Naive thymus-derived CD4-positive, alpha-beta T cell (primary cell): ENCODE measurements at regions of chr9 and their contacts with region 1.

Region 1: GRCh38 chr9:35646533-35647265 is 4.0 kb downstream of the SIT1 start:
- DNase-seq: peak; percentile 87 to 96 (median 93)
- ATAC-seq: peak; percentile 95
- H3K4me3 ChIP-seq: peak overlapping the region; percentile 90
- H3K4me3 Mint-ChIP-seq: peak overlapping the region; percentile 90 to 100 (median 96)
- H3K27ac ChIP-seq: peak overlapping the region; percentile 83
- H3K27ac Mint-ChIP-seq: peak overlapping the region; percentile 86 to 99 (median 96)
- H3K4me1 ChIP-seq: peaks cover 44 to 51% of the 10 kb centered on the region in 2 donors
- H3K4me1 Mint-ChIP-seq: peaks cover 40 to 70% (median 46%) of the 10 kb centered on the region in 7 donors
- H3K27me3 ChIP-seq: no peaks in the 10 kb centered on the region
- H3K27me3 Mint-ChIP-seq: no peaks in the 10 kb centered on the region

Region 2: GRCh38 chr9:35611230-35611797 is 35.4 kb before region 1 on chr9:
- CTCF ChIA-PET with region 1: interaction called, 118 read pairs
- POLR2A ChIA-PET with region 1: interaction called, 94 read pairs
- intact Hi-C with region 1: no loop called
- DNase-seq: peak in 6 of 9 donors; percentile 36 to 55 (median 45)
- ATAC-seq: peak; percentile 90
- H3K4me3 ChIP-seq: no peak overlapping the region
- H3K4me3 Mint-ChIP-seq: peak overlapping the region in 1 of 10 donors; percentile 6
- H3K27ac ChIP-seq: no peak overlapping the region
- H3K27ac Mint-ChIP-seq: peak overlapping the region in 3 of 9 donors; percentile 35 to 69 (median 39)
- H3K4me1 ChIP-seq: peaks cover 15 to 17% of the 10 kb centered on the region in 2 donors
- H3K4me1 Mint-ChIP-seq: peaks cover 18 to 32% (median 24%) of the 10 kb centered on the region in 7 donors
- H3K27me3 ChIP-seq: no peaks in the 10 kb centered on the region
- H3K27me3 Mint-ChIP-seq: no peaks in the 10 kb centered on the region

Region 3: DNA sequence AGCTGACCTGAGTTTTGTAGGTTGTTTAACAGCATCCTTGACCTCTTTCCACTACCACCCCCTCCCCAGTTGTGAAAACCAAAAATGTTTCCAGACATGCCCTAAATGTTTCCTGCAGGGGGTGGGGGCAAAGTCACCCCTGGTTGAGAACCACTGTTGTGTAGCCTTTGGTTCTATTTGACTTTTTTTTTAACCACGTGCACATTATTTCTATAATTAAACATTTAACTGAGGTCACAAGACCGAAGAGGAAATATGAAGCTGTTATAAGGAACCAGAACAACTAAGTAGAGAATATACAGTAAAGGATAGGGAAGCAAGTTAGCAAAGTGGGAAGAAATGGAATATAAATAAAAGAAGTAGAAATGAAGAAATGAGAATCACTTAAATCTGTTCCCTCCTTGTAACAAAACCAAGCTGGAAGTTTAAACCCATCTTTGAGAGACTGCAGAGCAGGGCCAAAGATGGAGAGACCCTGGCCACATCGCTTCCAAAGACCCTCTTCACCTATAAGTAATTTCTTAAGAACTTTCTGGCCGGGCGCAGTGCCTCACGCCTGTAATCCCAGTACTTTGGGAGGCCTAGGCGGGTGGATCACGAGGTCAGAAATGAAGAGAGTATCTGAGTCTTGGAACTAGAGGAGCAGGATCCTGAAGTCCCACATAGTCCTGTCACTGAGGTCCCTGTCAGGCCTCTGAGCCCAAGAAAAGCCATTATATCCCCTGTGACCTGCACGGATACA is 10.4 kb before region 1 on chr9:
- CTCF ChIA-PET with region 1: no interaction called
- POLR2A ChIA-PET with region 1: interaction called, 14 read pairs
- intact Hi-C with region 1: loop called in 1 of 2 experiments (anchors 1 kb)
- DNase-seq: no peak
- ATAC-seq: peak; percentile 49
- H3K4me3 ChIP-seq: no peak overlapping the region
- H3K4me3 Mint-ChIP-seq: peak overlapping the region in 2 of 10 donors; percentile 20 to 37
- H3K27ac ChIP-seq: no peak overlapping the region
- H3K27ac Mint-ChIP-seq: peak overlapping the region in 6 of 9 donors; percentile 21 to 90 (median 62)
- H3K4me1 ChIP-seq: peaks cover 19 to 35% of the 10 kb centered on the region in 2 donors
- H3K4me1 Mint-ChIP-seq: peaks cover 38 to 64% (median 53%) of the 10 kb centered on the region in 7 donors
- H3K27me3 ChIP-seq: no peaks in the 10 kb centered on the region
- H3K27me3 Mint-ChIP-seq: no peaks in the 10 kb centered on the region

Region 4: GRCh38 chr9:35664531-35665470 is 18.1 kb after region 1 on chr9 and contains the start of gene ARHGEF39:
- CTCF ChIA-PET with region 1: interaction called, 103 read pairs
- POLR2A ChIA-PET with region 1: interaction called, 264 read pairs
- intact Hi-C with region 1: loop called in 1 of 2 experiments (anchors 2 kb)
- DNase-seq: peak; percentile 47 to 87 (median 59)
- ATAC-seq: peak; percentile 78
- H3K4me3 ChIP-seq: peak within 1 kb of the TSS; percentile 69
- H3K4me3 Mint-ChIP-seq: peak within 1 kb of the TSS; percentile 82 to 94 (median 87)
- H3K27ac ChIP-seq: peak within 1 kb of the TSS; percentile 54
- H3K27ac Mint-ChIP-seq: peak within 1 kb of the TSS; percentile 60 to 100 (median 80)
- H3K4me1 ChIP-seq: peaks cover 29% of the 10 kb centered on the region in 2 donors
- H3K4me1 Mint-ChIP-seq: peaks cover 39 to 66% (median 64%) of the 10 kb centered on the region in 7 donors
- H3K27me3 ChIP-seq: no peaks in the 10 kb centered on the region
- H3K27me3 Mint-ChIP-seq: no peaks in the 10 kb centered on the region
- total RNA-seq, gene ARHGEF39: 0.11 to 10.4 (median 1.0) TPM in 3 of 5 experiments, not detected in the others

Region 5: DNA sequence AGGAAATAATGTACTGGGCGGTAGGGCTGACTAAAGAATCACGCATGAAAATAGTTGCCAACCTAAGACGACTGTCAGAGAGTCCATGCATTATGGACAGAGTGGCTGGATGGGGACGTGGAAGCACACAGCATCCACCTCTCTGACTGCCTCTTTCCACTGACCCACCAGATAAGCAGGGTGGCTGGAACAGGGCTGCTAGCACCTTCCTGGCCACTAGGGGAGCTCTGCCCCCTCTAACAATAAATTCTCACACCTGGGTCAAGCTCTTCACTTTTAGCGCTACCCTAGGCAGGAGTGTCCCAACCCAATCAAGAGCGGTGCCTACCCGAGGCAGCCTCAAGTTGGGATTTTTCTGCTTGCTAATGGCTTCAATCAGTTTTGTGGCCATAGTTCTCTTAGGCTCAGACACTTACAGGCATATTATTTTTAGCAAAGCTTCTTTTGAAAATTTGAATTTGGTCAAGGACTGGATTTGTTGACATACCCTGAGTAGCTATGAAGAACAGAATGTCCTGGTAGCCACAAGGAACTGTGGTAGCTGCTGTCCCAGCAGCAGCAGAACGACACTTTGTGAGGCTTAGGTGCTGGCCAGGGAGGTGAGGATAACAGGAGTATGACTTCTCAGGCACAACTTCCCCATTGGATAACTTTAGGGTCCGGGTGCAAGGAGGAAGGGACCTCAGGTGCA is 50.0 kb after region 1 on chr9:
- CTCF ChIA-PET with region 1: interaction called, 39 read pairs
- POLR2A ChIA-PET with region 1: interaction called, 36 read pairs
- intact Hi-C with region 1: loop called in 1 of 2 experiments (anchors 1 kb)
- DNase-seq: peak in 8 of 9 donors; percentile 15 to 56 (median 41)
- ATAC-seq: peak; percentile 91
- H3K4me3 ChIP-seq: no peak overlapping the region
- H3K4me3 Mint-ChIP-seq: no peak overlapping the region
- H3K27ac ChIP-seq: no peak overlapping the region
- H3K27ac Mint-ChIP-seq: peak overlapping the region in 8 of 9 donors; percentile 33 to 85 (median 66)
- H3K4me1 ChIP-seq: peaks cover 0 to 10% of the 10 kb centered on the region in 2 donors
- H3K4me1 Mint-ChIP-seq: peaks cover 6 to 15% (median 12%) of the 10 kb centered on the region in 7 donors
- H3K27me3 ChIP-seq: no peaks in the 10 kb centered on the region
- H3K27me3 Mint-ChIP-seq: no peaks in the 10 kb centered on the region

Region 6: DNA sequence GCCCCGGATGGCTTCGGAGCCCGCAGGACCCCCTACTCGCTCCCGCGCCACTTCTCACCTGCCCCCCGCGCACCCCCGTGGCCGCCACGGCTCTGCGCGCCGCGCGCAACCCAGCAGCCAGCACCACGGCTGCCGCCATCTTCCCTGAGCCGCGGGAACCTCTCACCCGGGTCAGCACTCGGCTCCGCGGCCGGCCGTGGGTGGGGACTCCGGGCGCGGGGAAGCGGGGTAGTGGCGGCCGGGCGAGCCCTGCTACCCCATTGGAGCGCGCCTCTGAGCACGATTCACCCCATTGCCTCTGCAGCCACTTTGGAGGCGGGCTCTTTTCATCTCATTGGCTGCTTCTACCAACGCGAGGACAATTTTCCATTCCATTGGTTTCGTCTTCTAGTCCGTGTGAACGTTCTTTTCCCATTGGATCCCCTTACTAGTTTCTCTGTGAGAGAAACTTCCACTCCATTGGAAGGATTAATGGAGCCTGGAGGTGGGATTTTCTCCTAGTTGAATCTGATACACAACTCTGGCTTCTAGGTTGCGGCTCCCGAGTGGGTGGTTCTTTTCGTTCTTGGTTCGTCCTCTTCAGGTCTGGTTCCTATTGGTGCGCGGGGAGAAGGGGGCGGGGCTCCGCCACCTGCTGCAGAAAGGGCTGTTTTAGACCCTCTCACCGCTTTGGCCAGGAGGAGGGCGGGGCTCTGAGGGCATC is 168.3 kb after region 1 on chr9 and contains the start of gene HINT2:
- CTCF ChIA-PET with region 1: no interaction called
- POLR2A ChIA-PET with region 1: interaction called, 5 read pairs
- intact Hi-C with region 1: loop called (anchors 1 kb)
- DNase-seq: peak; percentile 84 to 98 (median 96)
- ATAC-seq: peak; percentile 86
- H3K4me3 ChIP-seq: peak within 1 kb of the TSS; percentile 100
- H3K4me3 Mint-ChIP-seq: peak within 1 kb of the TSS; percentile 91 to 100 (median 96)
- H3K27ac ChIP-seq: peak within 1 kb of the TSS; percentile 77
- H3K27ac Mint-ChIP-seq: peak within 1 kb of the TSS; percentile 87 to 99 (median 95)
- H3K4me1 ChIP-seq: peaks cover 19 to 27% of the 10 kb centered on the region in 2 donors
- H3K4me1 Mint-ChIP-seq: peaks cover 23 to 43% (median 38%) of the 10 kb centered on the region in 7 donors
- H3K27me3 ChIP-seq: no peaks in the 10 kb centered on the region
- H3K27me3 Mint-ChIP-seq: peaks cover 0 to 12% (median 0%) of the 10 kb centered on the region in 5 donors
- total RNA-seq, gene HINT2: 14.3 to 50.7 (median 22.2) TPM

Region 7: GRCh38 chr9:36400332-36401163 is 753.8 kb after region 1 on chr9:
- CTCF ChIA-PET with region 1: no interaction called
- POLR2A ChIA-PET with region 1: no interaction called
- intact Hi-C with region 1: loop called in 1 of 2 experiments (anchors 5 kb)
- DNase-seq: peak; percentile 83 to 94 (median 91)
- ATAC-seq: peak; percentile 88
- H3K4me3 ChIP-seq: peak overlapping the region; percentile 77
- H3K4me3 Mint-ChIP-seq: peak overlapping the region; percentile 85 to 97 (median 92)
- H3K27ac ChIP-seq: peak overlapping the region; percentile 94
- H3K27ac Mint-ChIP-seq: peak overlapping the region; percentile 92 to 98 (median 95)
- H3K4me1 ChIP-seq: peaks cover 16 to 26% of the 10 kb centered on the region in 2 donors
- H3K4me1 Mint-ChIP-seq: peaks cover 32 to 60% (median 54%) of the 10 kb centered on the region in 7 donors
- H3K27me3 ChIP-seq: no peaks in the 10 kb centered on the region
- H3K27me3 Mint-ChIP-seq: peaks cover 0 to 2% (median 0%) of the 10 kb centered on the region in 5 donors